Right ventricle myocardium inferior (tissue), 1 donor: ENCODE measurements at regions of chr3 and their contacts with region 1.

Region 1: GRCh38 chr3:46062679-46063078 is 35.4 kb upstream of the XCR1 start:
- DNase-seq: no peak
- ATAC-seq: peak; percentile 82

Region 2: GRCh38 chr3:45995236-45996192 is 67.2 kb before region 1 on chr3 and contains the start of gene FYCO1:
- intact Hi-C with region 1: loop called (anchors 5 kb)
- DNase-seq: peak; percentile 97
- ATAC-seq: peak; percentile 95
- total RNA-seq, gene FYCO1: 107 TPM

Region 3: DNA sequence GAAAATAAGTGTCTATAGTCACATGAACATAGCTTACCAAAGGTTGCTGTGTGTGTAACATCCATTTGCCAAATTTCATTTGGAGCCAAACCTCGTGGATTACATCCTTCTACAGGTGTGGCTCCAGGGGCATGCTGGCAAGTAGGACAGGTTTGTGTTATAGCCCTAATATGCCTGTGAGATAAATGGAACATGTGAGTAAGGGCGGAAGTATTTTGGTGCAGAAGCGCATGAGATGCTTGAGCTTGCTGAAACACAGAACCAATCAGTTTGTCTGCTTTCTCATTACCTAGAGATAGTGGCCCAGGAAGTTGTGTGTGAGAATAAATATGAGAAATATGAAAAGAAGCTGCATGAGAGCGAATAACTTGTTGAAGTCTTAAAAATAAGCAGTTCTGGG is 13.6 kb before region 1 on chr3:
- intact Hi-C with region 1: no loop called
- DNase-seq: no peak
- ATAC-seq: no peak